ENCODE measurements at regions of chr7 and their contacts with region 1.

Region 1: GRCh38 chr7:21261627-21262594 is 166.0 kb upstream of the SP4 start:
- DNase-seq: peak; percentile 29 to 71
- ATAC-seq: peak; percentile 88 to 95 (median 95)
- H3K4me3 ChIP-seq: no peak overlapping the region
- H3K4me3 Mint-ChIP-seq: no peak overlapping the region
- H3K27ac ChIP-seq: no peak overlapping the region
- H3K27ac Mint-ChIP-seq: no peak overlapping the region
- H3K4me1 ChIP-seq: peaks cover 7% of the 10 kb centered on the region
- H3K4me1 Mint-ChIP-seq: peaks cover 15 to 19% of the 10 kb centered on the region in 2 donors
- H3K27me3 ChIP-seq: no peaks in the 10 kb centered on the region
- H3K27me3 Mint-ChIP-seq: no peaks in the 10 kb centered on the region
- CTCF ChIP-seq: peak; percentile 71

Region 2: DNA sequence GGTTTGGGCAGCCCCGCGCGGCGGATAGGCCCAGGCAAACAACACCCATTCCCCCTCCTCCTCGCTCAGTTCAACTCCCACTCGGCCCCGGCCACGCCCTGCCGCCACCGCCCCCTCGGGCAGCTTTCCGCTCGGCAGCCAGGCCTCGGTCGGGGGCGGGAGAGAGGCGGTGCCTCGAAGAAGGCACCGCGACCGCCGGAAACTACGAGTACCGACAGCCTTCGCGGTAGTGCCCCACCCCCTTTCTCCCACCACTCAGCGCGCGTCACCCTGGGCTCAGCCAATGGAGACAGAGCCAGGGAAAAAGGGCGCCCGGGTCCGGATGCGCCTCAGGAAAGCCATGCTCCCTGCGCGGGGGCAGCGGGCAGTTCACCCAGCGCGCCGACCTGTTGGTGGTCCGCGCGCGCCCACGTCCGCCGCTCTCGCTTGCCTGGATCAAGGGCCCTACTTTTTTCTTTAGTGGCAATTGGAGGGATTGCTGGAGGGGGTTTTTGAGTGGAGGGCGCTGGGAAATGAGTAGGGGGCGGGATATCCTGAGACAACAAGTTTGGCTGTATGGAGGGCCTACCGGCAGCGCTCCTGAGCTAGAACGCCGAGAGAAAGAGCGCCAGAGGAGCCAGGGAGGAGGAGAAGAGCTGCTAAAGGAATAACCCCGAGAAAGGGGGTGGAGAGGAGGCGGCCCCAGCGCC is 165.4 kb after region 1 on chr7:
- intact Hi-C with region 1: no loop called
- DNase-seq: peak; percentile 98 to 99
- ATAC-seq: peak; percentile 75 to 90 (median 77)
- H3K4me3 ChIP-seq: peak overlapping the region; percentile 92
- H3K4me3 Mint-ChIP-seq: peak overlapping the region; percentile 99
- H3K27ac ChIP-seq: peak overlapping the region; percentile 91
- H3K27ac Mint-ChIP-seq: peak overlapping the region; percentile 99 to 100
- H3K4me1 ChIP-seq: peaks cover 27% of the 10 kb centered on the region
- H3K4me1 Mint-ChIP-seq: peaks cover 45 to 49% of the 10 kb centered on the region in 2 donors
- H3K27me3 ChIP-seq: no peaks in the 10 kb centered on the region
- H3K27me3 Mint-ChIP-seq: no peaks in the 10 kb centered on the region
- CTCF ChIP-seq: no peak

Region 3: GRCh38 chr7:21448974-21449373 is 187.1 kb after region 1 on chr7:
- intact Hi-C with region 1: no loop called
- DNase-seq: no peak
- ATAC-seq: no peak
- H3K4me3 ChIP-seq: no peak overlapping the region
- H3K4me3 Mint-ChIP-seq: no peak overlapping the region
- H3K27ac ChIP-seq: no peak overlapping the region
- H3K27ac Mint-ChIP-seq: no peak overlapping the region
- H3K4me1 ChIP-seq: peaks cover 11% of the 10 kb centered on the region
- H3K4me1 Mint-ChIP-seq: peaks cover 69 to 73% of the 10 kb centered on the region in 2 donors
- H3K27me3 ChIP-seq: no peaks in the 10 kb centered on the region
- H3K27me3 Mint-ChIP-seq: no peaks in the 10 kb centered on the region
- CTCF ChIP-seq: no peak

Region 4: DNA sequence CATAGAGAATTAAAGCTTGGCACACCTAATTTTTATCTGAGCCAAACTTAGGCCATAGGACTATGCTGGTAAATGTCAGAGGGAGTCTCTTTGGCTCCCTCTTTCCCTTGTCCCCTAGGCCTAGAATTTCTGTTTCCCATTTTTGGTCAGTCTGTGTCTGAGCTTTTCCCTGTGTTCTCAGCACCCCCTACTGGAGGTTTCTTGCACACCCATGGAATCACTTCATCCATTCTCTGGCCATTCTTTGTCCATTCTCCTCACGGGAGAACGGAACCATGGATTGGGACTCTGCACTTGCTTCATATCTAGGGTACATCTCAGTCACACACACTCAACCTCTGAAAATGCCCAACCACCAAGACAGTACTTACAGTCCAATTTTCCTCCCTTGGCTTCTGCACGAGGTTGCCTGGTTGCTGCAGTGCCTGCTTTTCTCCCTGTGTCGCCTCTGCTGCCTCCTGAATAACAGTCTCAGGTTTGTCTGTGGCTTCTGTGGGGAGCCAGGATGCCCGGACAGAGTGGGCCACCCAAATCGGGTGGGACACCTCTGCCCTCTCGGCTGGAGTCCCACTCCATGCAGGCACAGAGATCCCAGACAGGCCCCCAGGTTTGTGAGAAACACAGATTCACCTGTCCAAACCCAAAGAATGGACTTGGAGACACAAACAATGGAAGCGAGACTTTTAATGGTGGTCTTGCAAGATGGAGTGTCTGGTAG is 245.9 kb after region 1 on chr7:
- intact Hi-C with region 1: loop called (anchors 1 kb)
- DNase-seq: peak; percentile 17 to 59
- ATAC-seq: peak in 2 of 3 donors; percentile 30 to 57
- H3K4me3 ChIP-seq: no peak overlapping the region
- H3K4me3 Mint-ChIP-seq: no peak overlapping the region
- H3K27ac ChIP-seq: no peak overlapping the region
- H3K27ac Mint-ChIP-seq: no peak overlapping the region
- H3K4me1 ChIP-seq: no peaks in the 10 kb centered on the region
- H3K4me1 Mint-ChIP-seq: peaks cover 21 to 28% of the 10 kb centered on the region in 2 donors
- H3K27me3 ChIP-seq: no peaks in the 10 kb centered on the region
- H3K27me3 Mint-ChIP-seq: no peaks in the 10 kb centered on the region
- CTCF ChIP-seq: peak; percentile 61

Region 5: DNA sequence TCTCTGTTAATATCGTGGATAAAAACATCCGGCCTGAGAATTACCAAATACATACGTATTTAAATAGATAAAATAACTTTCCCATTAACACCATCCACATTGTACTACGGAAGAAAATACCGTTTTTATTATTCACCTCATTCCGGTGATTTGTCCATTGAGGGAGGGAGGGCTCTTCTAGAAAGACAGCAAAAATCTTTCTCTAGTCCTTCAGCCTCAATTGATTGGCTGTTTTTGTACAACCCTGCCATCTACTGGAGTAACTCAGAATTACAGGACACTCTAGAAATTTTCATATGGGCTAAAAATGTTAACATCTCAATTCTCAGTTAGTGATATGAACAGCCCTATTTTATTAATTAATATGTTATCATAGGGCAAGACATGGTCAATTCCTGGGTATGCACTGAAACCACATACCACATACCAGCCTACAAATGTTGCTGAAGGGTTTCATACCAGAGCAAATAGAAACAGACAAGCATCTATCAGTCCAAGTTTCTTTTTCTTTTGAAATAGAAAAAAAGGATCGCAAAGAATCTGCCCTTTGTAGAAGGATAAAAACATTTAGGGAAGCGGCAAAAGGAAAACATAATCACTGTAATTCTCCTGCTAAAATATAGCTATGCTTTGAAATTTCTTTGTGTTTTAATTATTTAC is 739.6 kb after region 1 on chr7:
- intact Hi-C with region 1: loop called (anchors 2 kb)
- DNase-seq: peak in 1 of 2 donors; percentile 72
- ATAC-seq: peak; percentile 80 to 84 (median 82)
- H3K4me3 ChIP-seq: no peak overlapping the region
- H3K4me3 Mint-ChIP-seq: no peak overlapping the region
- H3K27ac ChIP-seq: no peak overlapping the region
- H3K27ac Mint-ChIP-seq: no peak overlapping the region
- H3K4me1 ChIP-seq: no peaks in the 10 kb centered on the region
- H3K4me1 Mint-ChIP-seq: peaks cover 5 to 6% of the 10 kb centered on the region in 2 donors
- H3K27me3 ChIP-seq: peaks cover under 1% of the 10 kb centered on the region
- H3K27me3 Mint-ChIP-seq: peaks cover 6 to 19% of the 10 kb centered on the region in 2 donors
- CTCF ChIP-seq: peak; percentile 86